Activated B cell treated with CpG ODN at 0.5 μM for 24 hours (primary cell): ENCODE measurements at regions of chr11 and their contacts with region 1.

Region 1: DNA sequence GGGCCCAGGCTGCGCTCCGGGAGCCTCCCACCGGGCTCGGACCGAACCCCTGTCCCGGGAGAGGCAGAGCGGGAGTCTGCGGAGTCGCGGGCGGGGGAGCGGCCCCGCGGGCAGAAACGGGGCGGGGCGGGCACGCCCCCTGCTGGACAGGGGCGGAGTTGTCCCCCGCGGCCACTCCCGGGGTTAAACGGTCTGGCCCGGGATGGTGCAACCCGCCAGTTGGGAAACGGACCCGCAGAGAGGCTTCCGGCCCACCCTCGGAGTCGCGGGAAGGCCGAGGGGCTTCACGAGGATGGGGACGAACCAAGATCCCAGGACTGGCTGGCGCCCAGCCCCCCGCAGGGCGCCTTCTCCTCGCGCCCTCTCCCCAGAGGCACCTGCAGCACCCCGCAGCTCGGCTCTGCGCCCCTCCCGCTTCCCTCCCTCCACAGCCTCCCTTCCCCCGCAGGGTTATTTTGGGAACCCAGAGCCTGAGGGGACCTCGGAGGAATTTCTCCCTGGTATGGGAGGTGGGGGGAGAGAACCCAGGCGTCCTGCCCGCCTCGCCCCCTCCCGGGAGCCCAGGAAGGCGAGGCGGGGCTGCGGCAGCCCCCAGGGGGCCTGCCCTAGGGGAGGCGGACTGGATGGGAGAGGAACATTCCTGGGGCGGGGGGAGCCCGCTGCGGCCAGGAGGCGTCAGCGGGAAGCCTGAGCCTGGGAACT is 902 bp downstream of the RASGRP2 start:
- DNase-seq: peak; percentile 89
- ATAC-seq: peak; percentile 12
- H3K4me3 Mint-ChIP-seq: peak overlapping the region; percentile 96
- H3K27ac Mint-ChIP-seq: no peak overlapping the region
- H3K4me1 Mint-ChIP-seq: peaks cover 43% of the 10 kb centered on the region
- H3K27me3 Mint-ChIP-seq: no peaks in the 10 kb centered on the region
- CTCF ChIP-seq: peak; percentile 85

Region 2: GRCh38 chr11:64284048-64284961 is 458.7 kb before region 1 on chr11 and contains the start of gene BAD:
- CTCF ChIA-PET with region 1: no interaction called
- POLR2A ChIA-PET with region 1: no interaction called
- intact Hi-C with region 1: no loop called
- DNase-seq: peak; percentile 80
- ATAC-seq: peak; percentile 79
- H3K4me3 Mint-ChIP-seq: peak within 1 kb of the TSS; percentile 90
- H3K27ac Mint-ChIP-seq: peak within 1 kb of the TSS; percentile 92
- H3K4me1 Mint-ChIP-seq: peaks cover 20% of the 10 kb centered on the region
- H3K27me3 Mint-ChIP-seq: no peaks in the 10 kb centered on the region
- CTCF ChIP-seq: no peak
- total RNA-seq, gene BAD: 21.7 and 26.6 TPM in 2 replicates

Region 3: DNA sequence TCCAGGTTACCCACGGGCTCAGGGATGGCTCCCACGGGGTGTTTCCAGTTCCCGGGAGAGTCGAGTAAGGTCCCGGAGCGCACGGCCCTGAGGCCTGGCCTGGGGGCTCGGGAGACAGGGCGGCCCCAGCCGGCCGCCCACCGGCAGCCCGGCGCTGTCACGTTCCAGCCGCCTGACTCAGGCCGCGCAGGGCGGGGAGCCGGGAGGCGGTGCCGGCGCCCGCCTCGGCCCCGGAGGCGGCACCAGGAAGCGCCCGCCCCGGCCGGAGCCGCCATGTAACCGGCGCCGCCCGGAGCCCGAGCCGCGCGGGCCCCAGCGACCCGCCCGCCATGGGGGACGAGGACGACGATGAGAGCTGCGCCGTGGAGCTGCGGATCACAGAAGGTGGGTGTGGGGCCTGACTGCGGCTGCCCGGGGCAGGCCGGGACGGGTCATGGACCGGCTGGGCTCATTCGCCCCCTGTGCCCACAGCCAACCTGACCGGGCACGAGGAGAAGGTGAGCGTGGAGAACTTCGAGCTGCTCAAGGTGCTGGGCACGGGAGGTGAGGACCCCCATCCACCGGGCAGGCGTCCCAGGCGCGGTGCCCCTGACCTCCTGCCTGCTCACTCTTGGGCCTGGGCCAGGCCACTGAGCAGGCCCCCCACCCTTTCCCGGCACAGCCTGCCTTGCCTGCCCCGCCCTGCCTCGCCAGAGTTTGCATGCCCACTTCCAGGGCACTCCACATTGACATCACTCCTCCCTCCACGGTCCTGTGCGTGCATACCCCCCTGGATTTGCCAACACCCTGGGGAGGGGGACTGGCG is 383.9 kb before region 1 on chr11 and contains the start of gene RPS6KA4:
- CTCF ChIA-PET with region 1: interaction called, 6 read pairs
- POLR2A ChIA-PET with region 1: interaction called, 13 read pairs
- intact Hi-C with region 1: no loop called
- DNase-seq: peak; percentile 55
- ATAC-seq: peak; percentile 72
- H3K4me3 Mint-ChIP-seq: peak within 1 kb of the TSS; percentile 82
- H3K27ac Mint-ChIP-seq: peak within 1 kb of the TSS; percentile 53
- H3K4me1 Mint-ChIP-seq: peaks cover 47% of the 10 kb centered on the region
- H3K27me3 Mint-ChIP-seq: no peaks in the 10 kb centered on the region
- CTCF ChIP-seq: no peak
- total RNA-seq, gene RPS6KA4: 18.0 and 22.6 TPM in 2 replicates

Region 4: GRCh38 chr11:64553551-64554201 is 189.4 kb before region 1 on chr11:
- CTCF ChIA-PET with region 1: no interaction called
- POLR2A ChIA-PET with region 1: no interaction called
- intact Hi-C with region 1: loop called (anchors 1 kb)
- DNase-seq: peak; percentile 62
- ATAC-seq: peak; percentile 68
- H3K4me3 Mint-ChIP-seq: no peak overlapping the region
- H3K27ac Mint-ChIP-seq: no peak overlapping the region
- H3K4me1 Mint-ChIP-seq: peaks cover 15% of the 10 kb centered on the region
- H3K27me3 Mint-ChIP-seq: peaks cover 4% of the 10 kb centered on the region
- CTCF ChIP-seq: peak; percentile 40

Region 5: DNA sequence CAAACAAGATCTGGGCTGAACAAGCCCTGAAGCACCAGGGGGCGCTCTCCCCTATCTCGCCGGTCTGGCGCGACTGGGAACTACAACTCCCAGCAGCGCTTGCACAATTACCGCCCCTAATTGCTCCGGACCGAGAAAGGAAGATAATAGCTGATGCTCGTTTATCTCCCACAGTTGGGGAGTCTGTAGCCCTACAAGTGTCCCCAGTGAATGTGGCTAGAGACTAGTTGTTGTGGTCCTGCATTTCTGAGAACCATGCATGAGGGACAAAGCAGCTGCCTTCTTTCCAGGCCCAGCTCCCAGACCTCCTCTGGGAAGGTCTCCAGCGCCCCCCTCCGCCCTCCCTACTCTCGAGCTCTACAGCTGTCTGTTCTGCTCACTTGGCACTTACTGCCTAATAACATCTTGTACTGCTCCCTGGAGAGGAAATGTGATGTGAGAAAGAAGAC is 54.5 kb before region 1 on chr11:
- CTCF ChIA-PET with region 1: interaction called, 49 read pairs
- POLR2A ChIA-PET with region 1: interaction called, 42 read pairs
- intact Hi-C with region 1: loop called (anchors 1 kb)
- DNase-seq: peak; percentile 91
- ATAC-seq: peak; percentile 95
- H3K4me3 Mint-ChIP-seq: peak overlapping the region; percentile 82
- H3K27ac Mint-ChIP-seq: peak overlapping the region; percentile 82
- H3K4me1 Mint-ChIP-seq: peaks cover 21% of the 10 kb centered on the region
- H3K27me3 Mint-ChIP-seq: peaks cover 15% of the 10 kb centered on the region
- CTCF ChIP-seq: peak; percentile 85

Region 6: GRCh38 chr11:64767344-64768299 is 24.6 kb after region 1 on chr11:
- CTCF ChIA-PET with region 1: interaction called, 24 read pairs
- POLR2A ChIA-PET with region 1: interaction called, 158 read pairs
- intact Hi-C with region 1: loop called (anchors 1 kb)
- DNase-seq: peak; percentile 60
- ATAC-seq: no peak
- H3K4me3 Mint-ChIP-seq: peak overlapping the region; percentile 11
- H3K27ac Mint-ChIP-seq: peak overlapping the region; percentile 85
- H3K4me1 Mint-ChIP-seq: peaks cover 91% of the 10 kb centered on the region
- H3K27me3 Mint-ChIP-seq: no peaks in the 10 kb centered on the region
- CTCF ChIP-seq: peak; percentile 82

Region 7: GRCh38 chr11:64803163-64803845 is 60.3 kb after region 1 on chr11 and contains the start of gene MAP4K2:
- CTCF ChIA-PET with region 1: interaction called, 3 read pairs
- POLR2A ChIA-PET with region 1: interaction called, 45 read pairs
- intact Hi-C with region 1: loop called (anchors 1 kb)
- DNase-seq: peak; percentile 91
- ATAC-seq: peak; percentile 80
- H3K4me3 Mint-ChIP-seq: peak within 1 kb of the TSS; percentile 87
- H3K27ac Mint-ChIP-seq: peak within 1 kb of the TSS; percentile 91
- H3K4me1 Mint-ChIP-seq: peaks cover 52% of the 10 kb centered on the region
- H3K27me3 Mint-ChIP-seq: no peaks in the 10 kb centered on the region
- CTCF ChIP-seq: no peak
- total RNA-seq, gene MAP4K2: 69.1 and 73.6 TPM in 2 replicates

Region 8: DNA sequence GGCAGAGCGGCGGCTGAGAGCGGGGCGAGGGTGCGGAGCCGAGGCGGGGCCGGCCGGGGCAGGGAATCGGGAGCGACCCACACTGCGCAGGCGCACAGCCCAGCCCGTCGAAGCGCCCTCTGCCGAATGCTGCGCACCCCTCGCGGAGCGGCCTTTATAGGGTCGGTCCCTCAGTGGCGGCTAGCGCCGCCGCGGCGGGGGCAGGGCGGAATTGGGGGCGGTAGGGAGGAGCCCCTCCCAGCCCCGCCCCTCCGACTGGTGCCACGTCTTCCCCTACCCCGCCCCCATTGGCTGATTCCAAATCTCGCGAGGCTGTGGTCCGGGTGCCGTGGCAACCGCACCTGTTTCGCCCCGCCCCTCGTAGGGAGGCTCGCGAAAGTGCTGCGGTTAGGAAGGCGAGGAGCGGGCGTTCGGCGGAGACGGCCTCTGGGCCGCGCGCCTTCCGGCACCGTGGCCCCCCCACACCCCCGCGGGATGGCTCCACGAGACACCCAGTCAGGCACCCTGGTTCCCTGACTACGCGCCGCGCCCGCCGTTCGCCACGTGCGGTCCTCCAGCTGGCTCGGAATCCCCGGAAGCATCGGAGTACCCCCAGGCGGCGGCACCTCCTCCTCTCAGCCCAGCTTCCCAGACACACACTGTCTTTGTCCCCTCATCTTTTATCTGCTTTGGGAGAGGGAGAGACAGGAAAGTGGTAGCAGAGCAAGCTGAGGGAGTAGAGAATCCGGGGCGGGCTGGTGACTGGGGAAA is 135.6 kb after region 1 on chr11 and contains the start of gene EHD1:
- CTCF ChIA-PET with region 1: no interaction called
- POLR2A ChIA-PET with region 1: interaction called, 23 read pairs
- intact Hi-C with region 1: no loop called
- DNase-seq: peak; percentile 98
- ATAC-seq: peak; percentile 81
- H3K4me3 Mint-ChIP-seq: peak within 1 kb of the TSS; percentile 97
- H3K27ac Mint-ChIP-seq: peak within 1 kb of the TSS; percentile 95
- H3K4me1 Mint-ChIP-seq: peaks cover 57% of the 10 kb centered on the region
- H3K27me3 Mint-ChIP-seq: no peaks in the 10 kb centered on the region
- CTCF ChIP-seq: no peak
- total RNA-seq, gene EHD1: 357 and 360 TPM in 2 replicates